Tibial artery (tissue), 4 donors: ENCODE measurements at regions of chr1 and their contacts with region 1.

Region 1: GRCh38 chr1:89804642-89805237 is 16.1 kb upstream of the LRRC8D start:
- DNase-seq: peak; percentile 84 to 91
- H3K4me3 ChIP-seq: no peak overlapping the region
- H3K27ac ChIP-seq: no peak overlapping the region
- H3K4me1 ChIP-seq: no peaks in the 10 kb centered on the region
- H3K27me3 ChIP-seq: peaks cover 0 to 14% of the 10 kb centered on the region in 2 donors
- CTCF ChIP-seq: peak; percentile 81 to 87

Region 2: DNA sequence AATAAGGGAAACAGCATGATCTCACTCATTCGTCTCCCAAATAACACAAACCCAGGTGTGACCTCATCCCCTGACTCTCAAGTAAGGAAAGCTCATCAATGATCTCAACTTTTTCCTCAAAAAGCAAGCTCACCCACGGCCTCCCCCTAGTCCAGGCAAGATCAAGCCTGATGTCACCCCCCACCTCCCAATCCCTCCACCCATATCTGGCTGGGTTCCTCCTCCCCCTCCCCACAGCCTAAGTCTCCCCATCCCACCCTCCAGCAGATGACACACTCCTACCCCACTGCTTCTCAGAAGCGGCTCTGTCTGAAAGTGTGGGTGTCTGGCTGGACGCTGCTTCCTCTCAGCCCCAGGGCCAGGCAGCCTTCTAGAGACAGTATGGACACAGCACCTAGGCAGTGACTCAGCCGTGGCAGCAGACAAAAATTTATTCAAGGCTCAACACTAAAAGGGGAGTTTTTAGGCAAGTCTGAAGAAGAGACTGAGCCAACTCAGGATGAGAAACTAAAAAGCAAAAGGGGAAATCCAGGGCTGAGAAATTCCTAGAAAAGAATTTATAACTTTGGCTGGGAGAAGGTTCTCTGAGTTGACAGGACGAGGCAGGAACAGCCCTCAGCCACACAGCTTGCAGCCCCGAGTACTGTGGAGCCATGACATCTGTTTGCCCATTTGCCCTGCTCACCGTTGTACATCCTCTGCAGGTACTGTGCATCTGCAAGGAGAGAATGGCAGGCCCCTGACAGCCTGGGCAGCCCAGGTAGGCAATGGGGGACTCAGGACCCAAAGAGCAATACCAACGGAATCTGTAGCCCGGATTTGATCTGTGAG is 65.5 kb before region 1 on chr1:
- intact Hi-C with region 1: no loop called
- DNase-seq: no peak
- H3K4me3 ChIP-seq: no peak overlapping the region
- H3K27ac ChIP-seq: no peak overlapping the region
- H3K4me1 ChIP-seq: peaks cover 0 to 4% (median 0%) of the 10 kb centered on the region in 4 donors
- H3K27me3 ChIP-seq: no peaks in the 10 kb centered on the region
- CTCF ChIP-seq: no peak

Region 3: DNA sequence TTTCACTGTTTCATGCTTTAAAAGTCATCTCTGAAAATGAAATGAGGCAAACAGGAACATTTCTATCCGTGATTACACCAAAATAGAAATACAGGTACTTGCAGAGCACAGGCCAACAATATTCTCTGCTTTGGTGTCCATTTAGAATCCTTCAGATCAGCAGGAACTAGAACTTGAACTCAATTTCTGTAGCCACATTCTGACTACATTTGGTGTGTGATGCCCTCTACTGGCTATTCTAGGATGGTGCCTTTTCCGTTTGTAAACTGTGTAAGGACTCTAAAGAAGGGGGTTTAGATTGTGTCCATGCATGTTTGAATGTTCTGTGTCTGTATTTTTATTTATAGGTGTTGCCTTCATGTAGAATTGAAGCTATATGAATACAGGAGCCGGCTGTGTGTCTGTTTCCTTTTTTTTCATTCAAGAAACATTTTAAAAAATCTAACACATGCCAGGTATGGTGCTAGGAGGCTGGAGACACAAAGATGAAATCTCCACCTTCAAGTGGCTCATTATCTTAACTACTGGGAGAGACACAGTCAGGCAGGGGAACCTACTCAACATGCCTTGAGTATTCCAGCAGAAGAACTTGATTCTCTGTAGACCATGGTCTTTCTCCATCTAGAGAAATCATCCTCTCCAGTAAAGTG is 182.6 kb after region 1 on chr1:
- intact Hi-C with region 1: loop called (anchors 5 kb)
- DNase-seq: peak in 1 of 2 donors; percentile 48
- H3K4me3 ChIP-seq: no peak overlapping the region
- H3K27ac ChIP-seq: no peak overlapping the region
- H3K4me1 ChIP-seq: no peaks in the 10 kb centered on the region
- H3K27me3 ChIP-seq: peaks cover 0 to 7% of the 10 kb centered on the region in 2 donors
- CTCF ChIP-seq: peak; percentile 81 to 85